Ascending aorta (tissue), 2 donors: ENCODE measurements at regions of chr19 and their contacts with region 1.

Region 1: DNA sequence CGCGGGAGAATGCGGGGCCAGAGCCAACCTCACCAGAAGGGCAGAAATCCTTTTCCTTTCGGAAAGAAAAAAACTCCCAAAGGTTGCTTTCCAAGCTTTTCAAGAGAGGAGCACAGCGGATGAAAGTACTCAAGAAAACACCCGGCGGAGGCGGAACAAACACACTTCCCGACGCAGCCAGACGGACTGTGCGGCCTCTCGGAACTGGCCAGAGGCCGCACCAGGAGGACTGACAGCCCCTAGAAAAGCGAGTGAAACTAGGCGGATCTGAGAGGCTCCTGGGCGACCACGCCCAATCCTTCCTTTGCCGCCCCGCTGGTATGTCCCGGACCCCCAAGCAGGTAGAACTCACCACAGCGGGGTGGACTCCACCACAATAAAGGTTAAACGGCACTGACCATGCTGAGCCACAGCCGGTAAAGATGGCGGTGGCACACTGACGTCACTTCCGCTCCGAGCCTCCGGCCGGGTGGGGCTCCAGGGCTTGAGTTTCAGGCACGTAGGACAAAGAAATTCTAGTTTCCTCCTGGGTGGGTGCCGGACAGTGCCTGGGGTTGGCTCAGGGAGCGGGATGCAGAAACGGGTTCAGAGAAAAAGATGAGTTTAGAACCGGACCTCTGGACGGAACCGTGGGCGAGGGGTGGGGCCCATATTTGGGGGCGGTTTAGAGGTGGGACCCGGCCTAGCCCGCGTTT is at the start of gene ZNF562:
- DNase-seq: peak; percentile 31 to 91
- H3K4me3 ChIP-seq: peak within 1 kb of the TSS; percentile 71 to 85
- H3K27ac ChIP-seq: peak within 1 kb of the TSS; percentile 84 to 94
- H3K4me1 ChIP-seq: peaks cover 0 to 3% of the 10 kb centered on the region in 2 donors
- H3K27me3 ChIP-seq: no peaks in the 10 kb centered on the region
- CTCF ChIP-seq: no peak
- total RNA-seq, gene ZNF562: 21.1 TPM

Region 2: DNA sequence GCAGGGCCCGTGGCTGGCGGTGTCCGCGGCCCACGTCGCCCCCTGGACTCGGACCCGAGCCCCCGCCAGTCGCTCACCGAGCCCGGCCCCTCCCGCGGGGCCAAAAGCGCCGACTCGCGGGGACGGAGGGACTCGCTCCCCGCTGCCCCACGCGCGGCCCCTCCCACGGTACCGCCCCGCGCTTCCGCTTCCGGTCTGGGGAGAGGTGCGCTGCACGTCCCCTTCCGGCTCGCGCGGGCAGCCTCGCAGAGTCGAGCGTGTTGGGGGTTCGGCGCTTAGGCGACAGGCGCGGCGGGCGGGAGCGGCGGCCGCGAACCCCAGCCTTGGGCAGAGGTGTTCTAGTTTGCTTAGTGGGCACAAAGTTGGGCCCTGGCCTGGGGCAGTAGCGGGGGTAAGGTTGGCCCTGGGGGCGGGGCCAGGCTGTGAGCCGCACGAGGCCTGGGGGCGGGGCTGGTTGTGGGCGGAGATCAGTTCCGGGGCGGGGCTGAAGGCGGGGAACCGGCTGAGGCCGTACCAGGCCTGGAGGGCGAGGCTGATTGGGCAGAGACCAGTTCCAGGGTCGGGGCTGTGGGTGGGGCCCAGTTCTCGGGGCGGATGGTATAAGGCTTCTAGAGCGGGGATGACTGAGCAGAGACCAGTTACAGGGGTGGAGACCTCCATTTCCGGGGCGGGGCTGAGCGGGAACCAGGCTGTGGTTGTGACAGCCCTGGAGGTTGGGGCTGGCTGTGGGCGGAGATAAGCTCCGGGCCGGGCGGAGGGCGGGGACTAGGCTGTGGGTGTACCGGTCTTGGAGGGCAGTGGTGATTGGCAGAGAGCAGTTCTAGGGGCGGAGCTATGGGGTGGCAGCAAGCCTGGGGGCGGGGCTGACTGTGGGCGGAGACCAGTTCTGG is 842.4 kb before region 1 on chr19 and contains the starts of genes MBD3L1 and ZNF558:
- intact Hi-C with region 1: loop called (anchors 10 kb)
- DNase-seq: peak; percentile 99 to 100
- H3K4me3 ChIP-seq: peak within 1 kb of the TSS; percentile 89 to 98
- H3K27ac ChIP-seq: peak within 1 kb of the TSS; percentile 88 to 98
- H3K4me1 ChIP-seq: peaks cover 0 to 8% of the 10 kb centered on the region in 2 donors
- H3K27me3 ChIP-seq: no peaks in the 10 kb centered on the region
- CTCF ChIP-seq: peak; percentile 7 to 56 (median 49)
- total RNA-seq, gene MBD3L1: not detected
- total RNA-seq, gene ZNF558: 12.8 TPM

Region 3: GRCh38 chr19:9362905-9363304 is 311.9 kb before region 1 on chr19 and contains the start of gene ZNF177:
- intact Hi-C with region 1: no loop called
- DNase-seq: no peak
- H3K4me3 ChIP-seq: peak within 1 kb of the TSS in 1 of 2 donors; percentile 9
- H3K27ac ChIP-seq: no peak within 1 kb of the TSS
- H3K4me1 ChIP-seq: no peaks in the 10 kb centered on the region
- H3K27me3 ChIP-seq: no peaks in the 10 kb centered on the region
- CTCF ChIP-seq: no peak
- total RNA-seq, gene ZNF177: not detected

Region 4: DNA sequence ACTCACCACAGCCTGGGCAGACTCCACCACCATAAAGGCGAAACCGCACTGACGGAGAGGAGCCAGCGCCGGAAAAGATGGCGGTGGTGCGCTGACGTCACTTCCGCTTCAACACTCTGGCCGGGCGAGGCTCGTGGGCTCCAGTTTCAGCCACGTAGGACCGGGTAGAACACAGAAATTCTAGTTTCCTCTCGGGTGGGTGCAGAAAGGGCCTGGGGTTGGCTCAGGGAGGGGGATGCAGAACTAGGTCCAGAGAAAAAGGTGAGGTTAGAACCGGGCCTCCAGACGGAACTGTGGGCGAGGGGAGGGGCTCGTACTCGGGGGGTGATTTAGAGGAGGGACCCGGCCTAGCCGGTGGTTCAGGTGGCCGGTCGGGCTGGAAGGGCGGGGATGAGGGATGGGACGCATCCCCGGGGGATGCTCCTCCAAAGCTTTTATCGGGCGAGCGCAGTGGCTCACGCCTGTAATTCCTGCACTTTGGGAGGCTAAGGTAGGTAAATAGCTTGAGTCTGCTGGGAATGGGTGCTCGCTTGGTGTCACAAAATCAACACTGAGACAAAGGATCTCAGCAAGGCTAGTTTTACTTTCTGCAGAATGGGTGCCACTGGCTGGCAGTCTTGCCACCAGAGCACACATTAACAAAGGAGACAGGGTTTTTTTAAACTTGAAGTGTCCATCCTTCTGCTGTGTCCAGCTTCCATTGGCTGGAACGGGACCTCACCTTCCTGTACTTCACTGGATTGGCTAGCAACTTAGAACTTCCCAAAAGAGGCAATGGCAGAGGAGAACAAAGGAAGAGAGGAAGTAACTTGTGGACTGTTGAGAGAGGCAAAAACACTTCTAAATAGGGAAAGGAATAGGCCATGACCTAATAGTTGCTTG is 53.4 kb before region 1 on chr19 and contains the start of gene ZNF561:
- intact Hi-C with region 1: loop called (anchors 1 kb)
- DNase-seq: peak; percentile 14 to 90
- H3K4me3 ChIP-seq: peak within 1 kb of the TSS; percentile 83 to 87
- H3K27ac ChIP-seq: peak within 1 kb of the TSS; percentile 89 to 91
- H3K4me1 ChIP-seq: peaks cover 0 to 17% of the 10 kb centered on the region in 2 donors
- H3K27me3 ChIP-seq: no peaks in the 10 kb centered on the region
- CTCF ChIP-seq: no peak
- total RNA-seq, gene ZNF561: 35.4 TPM

Region 5: GRCh38 chr19:9768175-9769112 is 93.6 kb after region 1 on chr19 and contains the start of gene ZNF846:
- intact Hi-C with region 1: loop called (anchors 2 kb)
- DNase-seq: peak; percentile 69 to 95
- H3K4me3 ChIP-seq: peak within 1 kb of the TSS; percentile 77 to 94
- H3K27ac ChIP-seq: peak within 1 kb of the TSS; percentile 92 to 94
- H3K4me1 ChIP-seq: peaks cover 3 to 14% of the 10 kb centered on the region in 2 donors
- H3K27me3 ChIP-seq: no peaks in the 10 kb centered on the region
- CTCF ChIP-seq: no peak
- total RNA-seq, gene ZNF846: 1.9 TPM

Region 6: DNA sequence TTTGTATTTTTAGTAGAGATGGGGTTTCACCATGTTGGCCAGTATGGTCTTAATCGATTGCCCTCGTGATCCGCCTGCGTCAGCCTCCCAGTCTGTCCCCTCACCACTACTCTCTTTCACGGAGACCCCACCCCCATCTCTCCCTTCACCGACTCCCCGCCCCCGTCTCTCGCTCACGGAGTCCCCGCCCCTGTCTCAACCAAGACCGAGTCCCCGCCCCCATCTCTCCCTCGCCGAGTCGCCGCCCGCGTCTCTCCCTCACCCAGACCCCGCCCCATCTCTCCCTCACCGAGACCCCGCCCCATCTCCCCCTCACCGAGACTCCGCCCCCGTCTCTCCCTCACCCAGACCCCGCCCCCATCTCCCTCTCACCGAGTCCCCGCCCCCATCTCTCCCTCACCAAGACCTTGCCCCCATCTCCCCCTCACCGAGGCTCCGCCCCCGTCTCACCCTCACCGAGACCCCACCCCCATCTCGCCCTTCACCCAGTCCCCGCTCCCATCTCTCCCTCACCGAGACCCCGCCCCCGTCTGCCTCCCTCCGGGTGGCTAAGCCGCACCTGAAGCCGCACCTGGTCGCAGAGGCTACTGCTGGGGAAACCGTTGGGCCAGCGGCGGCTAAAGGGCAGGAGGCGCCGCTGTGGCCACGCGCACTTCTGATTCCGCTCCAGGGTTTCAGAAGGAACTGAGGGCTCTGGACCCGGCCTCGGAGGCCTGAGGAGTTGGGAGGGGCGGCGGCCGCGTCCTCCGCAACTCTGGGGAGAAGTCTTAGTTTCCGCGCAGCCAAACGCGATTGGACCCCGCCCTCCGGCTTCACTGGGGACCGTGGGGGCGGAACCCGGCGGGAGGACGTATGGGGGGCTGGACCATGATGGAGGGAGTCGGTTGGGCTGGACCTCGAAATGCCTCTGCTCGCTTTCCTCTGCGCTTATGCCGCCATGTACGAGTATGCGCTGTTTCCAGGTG is 110.8 kb after region 1 on chr19:
- intact Hi-C with region 1: loop called (anchors 2 kb)
- DNase-seq: peak; percentile 87 to 98
- H3K4me3 ChIP-seq: peak overlapping the region; percentile 74 to 78
- H3K27ac ChIP-seq: peak overlapping the region; percentile 98
- H3K4me1 ChIP-seq: peaks cover 0 to 6% of the 10 kb centered on the region in 2 donors
- H3K27me3 ChIP-seq: no peaks in the 10 kb centered on the region
- CTCF ChIP-seq: no peak